ENCODE measurements at regions of chr13 and their contacts with region 1.

Region 1: DNA sequence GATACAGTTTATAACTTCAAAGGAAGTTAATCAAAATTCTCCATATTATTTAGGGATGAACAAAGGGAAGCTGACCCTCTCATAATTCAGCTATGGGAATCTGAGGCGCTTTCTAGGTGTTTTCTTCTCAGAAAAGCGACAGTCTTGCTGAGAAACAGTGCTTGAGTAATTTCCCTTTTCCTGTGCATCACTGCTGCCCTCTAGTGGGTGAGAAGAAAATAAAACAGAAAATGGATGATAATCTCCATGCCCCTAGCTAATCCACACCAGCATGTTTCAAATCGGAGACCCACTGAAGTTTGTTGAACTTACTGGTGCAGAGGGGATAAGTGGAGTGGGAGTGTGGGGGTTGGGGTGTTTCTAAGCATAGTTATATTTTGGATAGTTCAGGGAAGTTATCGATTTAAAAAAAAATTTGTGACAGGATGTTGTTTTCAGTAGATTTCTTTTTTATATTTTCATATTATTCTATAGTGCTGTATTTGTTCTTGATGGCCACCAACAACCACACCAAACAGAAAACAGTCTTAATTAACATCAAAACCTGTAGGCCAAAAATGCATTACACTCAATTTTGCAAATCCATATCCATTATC is 21.4 kb downstream of the LCP1 start:
- DNase-seq: no peak
- H3K4me3 ChIP-seq: no peak overlapping the region
- CTCF ChIP-seq: peak; percentile 68

Region 2: DNA sequence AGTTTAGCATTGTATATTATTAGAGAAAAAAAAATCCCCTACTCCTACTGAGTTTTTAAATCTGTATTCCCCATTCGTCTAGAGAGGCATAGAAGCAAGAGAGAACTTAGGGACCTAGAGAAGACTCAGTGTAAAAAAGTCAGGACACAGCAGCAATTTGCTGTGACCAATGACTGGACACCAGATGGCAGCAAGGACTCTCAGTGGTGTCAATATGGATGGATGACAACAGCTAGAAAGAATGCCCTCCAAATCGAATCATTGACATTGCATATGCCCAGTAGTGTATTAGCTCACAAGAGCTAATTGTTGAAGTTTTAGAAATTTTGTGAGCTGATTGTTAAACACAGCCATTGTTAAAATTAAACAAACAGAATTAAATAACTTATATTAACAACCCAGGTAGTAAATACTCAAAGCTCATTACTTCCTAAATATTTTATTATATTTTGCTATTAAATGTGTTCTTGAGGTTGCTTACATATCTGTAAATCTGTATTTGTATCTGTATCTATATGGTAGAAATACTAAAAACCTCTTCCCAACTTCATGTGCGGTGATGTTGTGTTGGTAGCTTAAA is 353.0 kb before region 1 on chr13:
- CTCF ChIA-PET with region 1: interaction called, 21 read pairs
- POLR2A ChIA-PET with region 1: no interaction called
- DNase-seq: no peak
- H3K4me3 ChIP-seq: no peak overlapping the region
- CTCF ChIP-seq: peak; percentile 38

Region 3: GRCh38 chr13:46143184-46143701 is 17.3 kb before region 1 on chr13:
- CTCF ChIA-PET with region 1: interaction called, 51 read pairs
- POLR2A ChIA-PET with region 1: no interaction called
- DNase-seq: no peak
- H3K4me3 ChIP-seq: no peak overlapping the region
- CTCF ChIP-seq: no peak

Region 4: DNA sequence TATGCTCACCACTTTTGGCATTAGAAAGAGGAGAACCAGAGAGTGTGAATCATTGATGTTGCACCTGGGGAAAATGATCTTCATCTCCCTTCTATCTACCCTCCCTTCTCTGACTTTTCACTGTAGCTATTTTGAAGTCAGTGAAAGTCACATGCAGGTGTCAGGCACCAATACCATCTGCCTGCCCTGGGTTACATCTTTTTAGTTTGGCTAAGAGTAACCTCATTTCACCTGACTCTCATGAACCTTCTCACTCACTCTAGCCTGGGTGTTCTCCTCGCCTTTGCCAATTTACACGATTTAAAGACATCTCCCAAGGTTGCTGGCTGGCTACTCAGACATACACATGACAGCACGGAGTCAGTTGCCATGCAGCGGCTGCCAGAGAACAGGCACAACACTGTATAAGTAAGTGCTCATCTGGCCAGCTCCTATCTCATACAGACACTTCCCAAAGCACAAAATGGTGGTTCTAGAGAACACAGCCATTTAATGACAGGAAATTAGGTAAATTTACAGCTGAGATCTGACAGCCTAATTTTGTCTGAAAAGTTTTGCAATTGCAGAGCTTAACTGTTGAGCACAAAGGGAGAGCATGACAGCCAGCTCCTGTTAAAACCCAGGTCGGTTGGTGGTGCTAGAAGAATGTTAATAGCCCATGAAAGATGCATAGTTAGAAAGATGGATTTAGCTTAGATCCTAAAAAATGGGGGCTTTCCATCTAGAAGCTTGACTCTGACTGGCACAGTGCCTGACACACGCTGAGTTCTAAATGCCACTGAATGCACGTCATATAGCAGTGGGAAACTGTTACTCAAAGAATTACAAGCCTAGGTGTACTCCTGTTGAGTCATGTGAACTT is 11.1 kb before region 1 on chr13:
- CTCF ChIA-PET with region 1: interaction called, 51 read pairs
- POLR2A ChIA-PET with region 1: no interaction called
- DNase-seq: no peak
- H3K4me3 ChIP-seq: no peak overlapping the region
- CTCF ChIP-seq: no peak

Region 5: DNA sequence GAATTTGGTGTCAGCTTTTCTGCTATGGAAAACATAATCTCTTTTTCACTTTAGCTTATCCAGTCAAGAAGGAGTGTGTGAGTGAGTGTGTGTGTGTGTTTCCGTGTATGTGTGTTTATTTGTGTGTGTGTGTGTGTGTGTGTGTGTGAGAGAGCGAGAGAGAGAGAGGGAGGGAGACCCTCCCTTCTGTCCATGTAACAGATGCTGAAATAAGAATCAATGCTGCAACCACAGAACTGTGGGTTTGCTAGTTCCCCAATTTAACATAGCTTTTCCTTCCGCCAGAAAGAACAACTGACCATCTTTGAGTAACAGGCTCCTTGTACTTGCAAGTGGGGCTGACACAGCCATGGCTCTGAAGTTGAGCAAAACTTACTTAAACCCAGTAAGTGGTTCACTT is 16.2 kb after region 1 on chr13:
- CTCF ChIA-PET with region 1: interaction called, 55 read pairs
- POLR2A ChIA-PET with region 1: no interaction called
- DNase-seq: no peak
- H3K4me3 ChIP-seq: no peak overlapping the region
- CTCF ChIP-seq: no peak

Region 6: DNA sequence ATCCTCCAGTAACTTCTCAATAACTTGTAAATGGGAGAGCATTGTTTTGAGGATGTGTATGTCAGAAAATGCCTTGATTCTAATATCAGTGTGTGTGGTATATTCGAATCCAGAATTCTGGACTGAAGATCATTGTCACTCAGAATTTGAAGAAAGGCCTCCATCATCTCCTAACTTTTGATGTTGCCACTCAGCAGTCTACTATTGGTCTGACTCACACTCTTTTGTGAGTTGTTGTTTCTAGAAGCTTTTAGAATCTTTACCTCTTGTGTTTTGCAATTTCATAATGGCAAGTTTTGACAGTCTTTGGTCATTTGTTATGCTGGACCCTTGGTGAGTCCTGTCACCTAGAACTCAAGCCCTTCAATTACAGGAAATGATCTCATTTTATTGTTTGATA is 149.5 kb after region 1 on chr13:
- CTCF ChIA-PET with region 1: interaction called, 18 read pairs
- POLR2A ChIA-PET with region 1: no interaction called
- DNase-seq: no peak
- H3K4me3 ChIP-seq: no peak overlapping the region
- CTCF ChIP-seq: no peak

Region 7: GRCh38 chr13:46321494-46322225 is 161.1 kb after region 1 on chr13:
- CTCF ChIA-PET with region 1: interaction called, 44 read pairs
- POLR2A ChIA-PET with region 1: no interaction called
- DNase-seq: no peak
- H3K4me3 ChIP-seq: no peak overlapping the region
- CTCF ChIP-seq: peak; percentile 72